Ovary (tissue), 10 donors: ENCODE measurements at regions of chr19 and their contacts with region 1.

Region 1: GRCh38 chr19:48492925-48493717 is 18.5 kb downstream of the LMTK3 start:
- DNase-seq: peak; percentile 95 to 98 (median 95)
- H3K4me3 ChIP-seq: peak overlapping the region; percentile 39
- H3K27ac ChIP-seq: peak overlapping the region in 1 of 2 donors; percentile 68
- H3K4me1 ChIP-seq: peaks cover 12% of the 10 kb centered on the region
- H3K27me3 ChIP-seq: no peaks in the 10 kb centered on the region
- CTCF ChIP-seq: no peak
- EP300 ChIP-seq: no peak
- POLR2A ChIP-seq: peak; percentile 76

Region 2: GRCh38 chr19:48381178-48381950 is 111.8 kb before region 1 on chr19:
- intact Hi-C with region 1: no loop called
- DNase-seq: no peak
- H3K4me3 ChIP-seq: no peak overlapping the region
- H3K27ac ChIP-seq: no peak overlapping the region
- H3K4me1 ChIP-seq: no peaks in the 10 kb centered on the region
- H3K27me3 ChIP-seq: no peaks in the 10 kb centered on the region
- CTCF ChIP-seq: no peak
- EP300 ChIP-seq: no peak
- POLR2A ChIP-seq: no peak

Region 3: GRCh38 chr19:48468775-48469288 is 24.3 kb before region 1 on chr19:
- intact Hi-C with region 1: no loop called
- DNase-seq: peak; percentile 99 to 100 (median 99)
- H3K4me3 ChIP-seq: peak overlapping the region; percentile 98
- H3K27ac ChIP-seq: peak overlapping the region; percentile 75 to 96
- H3K4me1 ChIP-seq: peaks cover 7% of the 10 kb centered on the region
- H3K27me3 ChIP-seq: no peaks in the 10 kb centered on the region
- CTCF ChIP-seq: no peak
- EP300 ChIP-seq: no peak
- POLR2A ChIP-seq: no peak

Region 4: GRCh38 chr19:48582168-48582567 is 89.0 kb after region 1 on chr19:
- intact Hi-C with region 1: loop called in 2 of 4 experiments (anchors 5 kb)
- DNase-seq: no peak
- H3K4me3 ChIP-seq: no peak overlapping the region
- H3K27ac ChIP-seq: no peak overlapping the region
- H3K4me1 ChIP-seq: no peaks in the 10 kb centered on the region
- H3K27me3 ChIP-seq: no peaks in the 10 kb centered on the region
- CTCF ChIP-seq: no peak
- EP300 ChIP-seq: no peak
- POLR2A ChIP-seq: no peak

Region 5: DNA sequence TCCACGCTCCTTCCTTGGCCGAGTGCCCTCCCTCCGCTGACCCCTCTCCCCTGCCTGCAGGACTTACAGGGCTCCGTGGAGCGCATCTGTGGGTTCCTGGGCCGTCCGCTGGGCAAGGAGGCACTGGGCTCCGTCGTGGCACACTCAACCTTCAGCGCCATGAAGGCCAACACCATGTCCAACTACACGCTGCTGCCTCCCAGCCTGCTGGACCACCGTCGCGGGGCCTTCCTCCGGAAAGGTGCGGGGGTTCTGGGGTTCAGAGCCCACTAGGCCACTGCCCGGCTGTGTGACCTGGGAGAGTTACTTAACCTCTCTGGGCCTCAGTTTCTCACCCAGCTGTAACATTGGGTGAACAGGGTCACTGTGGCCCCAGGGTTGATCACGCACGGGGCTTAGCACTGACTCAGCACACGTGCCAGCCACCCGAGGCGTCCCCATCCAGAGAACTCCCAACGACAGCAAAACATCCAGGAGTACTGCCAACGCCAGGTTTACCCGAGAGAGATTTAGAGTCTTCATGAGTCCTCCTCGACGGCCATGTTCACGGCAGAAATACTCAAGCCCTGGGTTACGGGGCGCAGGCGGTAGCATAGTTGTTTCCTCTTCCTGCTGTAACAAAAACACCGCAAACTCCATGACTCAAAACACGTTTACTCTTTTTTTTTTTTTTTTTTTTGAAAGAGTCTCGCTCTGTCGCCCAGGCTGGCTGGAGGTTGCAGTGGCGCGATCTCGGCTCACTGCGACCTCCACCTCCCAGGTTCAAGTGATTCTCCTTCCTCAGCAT is 103.8 kb after region 1 on chr19:
- intact Hi-C with region 1: loop called in 2 of 4 experiments (anchors 10 kb)
- DNase-seq: no peak
- H3K4me3 ChIP-seq: no peak overlapping the region
- H3K27ac ChIP-seq: no peak overlapping the region
- H3K4me1 ChIP-seq: no peaks in the 10 kb centered on the region
- H3K27me3 ChIP-seq: no peaks in the 10 kb centered on the region
- CTCF ChIP-seq: no peak
- EP300 ChIP-seq: no peak
- POLR2A ChIP-seq: no peak

Region 6: GRCh38 chr19:48618916-48619691 is 126.0 kb after region 1 on chr19 and contains the starts of genes RPL18 and SPHK2:
- intact Hi-C with region 1: loop called in 1 of 4 experiments (anchors 10 kb)
- DNase-seq: peak; percentile 96 to 98 (median 98)
- H3K4me3 ChIP-seq: peak within 1 kb of the TSS; percentile 74
- H3K27ac ChIP-seq: peak within 1 kb of the TSS; percentile 54 to 91
- H3K4me1 ChIP-seq: peaks cover 7% of the 10 kb centered on the region
- H3K27me3 ChIP-seq: no peaks in the 10 kb centered on the region
- CTCF ChIP-seq: peak in 2 of 3 donors; percentile 33
- EP300 ChIP-seq: peak; percentile 70
- POLR2A ChIP-seq: peak; percentile 91
- total RNA-seq, gene RPL18: 2,699 to 8,435 (median 3,584) TPM
- total RNA-seq, gene SPHK2: 12.3 to 37.2 (median 27.0) TPM